Ovary (tissue), 10 donors: ENCODE measurements at regions of chr22 and their contacts with region 1.

Region 1: DNA sequence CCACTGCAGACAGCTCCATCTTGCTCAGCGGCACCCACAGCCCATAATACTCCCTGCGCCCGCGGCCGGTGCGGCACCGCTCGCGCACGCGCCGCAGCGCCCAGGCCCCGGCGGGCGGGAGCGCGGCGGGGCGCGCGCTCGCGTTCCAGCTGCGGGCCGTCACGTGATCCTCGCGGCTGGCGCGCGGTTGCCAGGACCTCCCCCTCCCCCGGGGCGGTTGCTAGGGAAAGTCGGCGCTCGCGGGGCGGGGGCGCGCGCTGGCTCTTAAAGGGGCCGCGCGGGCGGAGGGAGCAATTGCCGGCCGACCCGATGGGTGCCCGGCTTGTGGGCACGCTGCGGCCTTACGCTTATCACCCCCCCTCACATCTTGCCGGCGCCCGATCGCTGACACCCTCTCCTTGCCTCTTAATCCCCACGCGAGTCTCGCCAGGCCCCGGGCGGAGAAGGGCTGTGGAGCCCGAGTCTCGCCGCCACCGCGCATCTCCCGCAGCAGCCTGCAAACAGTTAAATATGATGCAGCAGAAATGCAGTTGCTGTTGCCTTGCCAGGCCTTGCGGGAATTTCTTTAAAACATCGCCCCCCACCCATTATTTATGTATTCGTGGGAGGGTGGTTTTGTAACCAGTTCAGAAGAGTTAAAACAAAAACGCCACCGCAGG is at the start of gene CBX6:
- DNase-seq: peak; percentile 96 to 99 (median 98)
- H3K4me3 ChIP-seq: peak within 1 kb of the TSS; percentile 64
- H3K27ac ChIP-seq: peak within 1 kb of the TSS; percentile 95
- H3K4me1 ChIP-seq: peaks cover 3% of the 10 kb centered on the region
- H3K27me3 ChIP-seq: no peaks in the 10 kb centered on the region
- CTCF ChIP-seq: peak in 1 of 3 donors; percentile 10
- EP300 ChIP-seq: no peak
- POLR2A ChIP-seq: peak; percentile 43
- total RNA-seq, gene CBX6: 32.7 to 175 (median 120) TPM

Region 2: GRCh38 chr22:38684895-38685294 is 187.4 kb before region 1 on chr22:
- intact Hi-C with region 1: no loop called
- DNase-seq: no peak
- H3K4me3 ChIP-seq: no peak overlapping the region
- H3K27ac ChIP-seq: no peak overlapping the region
- H3K4me1 ChIP-seq: peaks cover 4% of the 10 kb centered on the region
- H3K27me3 ChIP-seq: no peaks in the 10 kb centered on the region
- CTCF ChIP-seq: no peak
- EP300 ChIP-seq: no peak
- POLR2A ChIP-seq: no peak

Region 3: DNA sequence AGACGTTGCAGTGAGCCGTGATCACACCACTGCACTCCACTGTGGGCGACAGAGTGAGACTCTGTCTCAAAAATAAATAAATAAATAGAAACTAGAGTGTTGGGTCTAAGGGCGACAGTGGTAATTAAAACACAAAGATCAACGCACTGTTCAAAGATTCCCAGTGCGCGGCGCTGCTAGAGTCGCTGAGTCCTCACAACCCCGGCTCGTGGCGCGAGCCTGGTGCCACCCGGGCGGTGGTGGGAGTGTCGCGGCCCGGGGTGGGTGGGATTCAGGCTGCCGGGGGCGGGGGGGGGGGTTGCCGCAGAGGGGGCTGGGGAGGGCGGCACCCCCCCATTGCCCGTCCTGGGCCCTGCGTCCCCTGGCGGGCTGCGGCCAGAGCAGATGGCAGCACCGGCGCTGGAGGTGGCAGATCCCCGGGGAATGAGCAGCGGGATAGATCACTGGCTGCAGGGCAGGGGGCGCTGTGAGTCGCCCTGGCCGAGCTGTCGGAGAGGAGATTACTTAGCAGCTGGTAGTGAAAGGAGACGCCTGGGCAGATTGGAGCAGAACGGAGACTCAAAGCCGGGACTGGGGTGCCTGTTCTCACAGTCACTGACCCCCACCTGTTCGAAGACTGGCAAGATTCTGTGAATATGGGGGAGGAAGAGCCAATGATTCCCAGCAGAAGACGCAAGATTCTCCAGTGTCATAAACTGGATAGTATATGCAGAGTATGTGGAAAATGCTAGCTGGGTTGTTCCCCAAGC is 54.9 kb after region 1 on chr22:
- intact Hi-C with region 1: loop called in 3 of 4 experiments (anchors 2 to 5 kb)
- DNase-seq: peak; percentile 66 to 76 (median 71)
- H3K4me3 ChIP-seq: peak overlapping the region; percentile 32
- H3K27ac ChIP-seq: peak overlapping the region in 1 of 2 donors; percentile 10
- H3K4me1 ChIP-seq: peaks cover 7% of the 10 kb centered on the region
- H3K27me3 ChIP-seq: no peaks in the 10 kb centered on the region
- CTCF ChIP-seq: peak in 2 of 3 donors; percentile 29 to 30
- EP300 ChIP-seq: no peak
- POLR2A ChIP-seq: no peak

Region 4: GRCh38 chr22:39003165-39003638 is 130.9 kb after region 1 on chr22:
- intact Hi-C with region 1: loop called (anchors 5 to 10 kb)
- DNase-seq: peak; percentile 75 to 81 (median 78)
- H3K4me3 ChIP-seq: no peak overlapping the region
- H3K27ac ChIP-seq: no peak overlapping the region
- H3K4me1 ChIP-seq: no peaks in the 10 kb centered on the region
- H3K27me3 ChIP-seq: no peaks in the 10 kb centered on the region
- CTCF ChIP-seq: peak; percentile 58 to 79 (median 62)
- EP300 ChIP-seq: no peak
- POLR2A ChIP-seq: no peak